ENCODE measurements at regions of chr7 and their contacts with region 1.

Region 1: GRCh38 chr7:117014673-117015133 is 61.4 kb downstream of the ST7 start:
- DNase-seq: peak; percentile 28
- H3K4me3 Mint-ChIP-seq: no peak overlapping the region
- H3K27ac Mint-ChIP-seq: no peak overlapping the region
- H3K4me1 Mint-ChIP-seq: peaks cover 40% of the 10 kb centered on the region
- H3K27me3 Mint-ChIP-seq: peaks cover 3% of the 10 kb centered on the region

Region 2: GRCh38 chr7:116786791-116787443 is 227.8 kb before region 1 on chr7:
- CTCF ChIA-PET with region 1: no interaction called
- intact Hi-C with region 1: loop called (anchors 1 kb)
- DNase-seq: peak; percentile 63
- H3K4me3 Mint-ChIP-seq: no peak overlapping the region
- H3K27ac Mint-ChIP-seq: no peak overlapping the region
- H3K4me1 Mint-ChIP-seq: no peaks in the 10 kb centered on the region
- H3K27me3 Mint-ChIP-seq: peaks cover 3% of the 10 kb centered on the region

Region 3: DNA sequence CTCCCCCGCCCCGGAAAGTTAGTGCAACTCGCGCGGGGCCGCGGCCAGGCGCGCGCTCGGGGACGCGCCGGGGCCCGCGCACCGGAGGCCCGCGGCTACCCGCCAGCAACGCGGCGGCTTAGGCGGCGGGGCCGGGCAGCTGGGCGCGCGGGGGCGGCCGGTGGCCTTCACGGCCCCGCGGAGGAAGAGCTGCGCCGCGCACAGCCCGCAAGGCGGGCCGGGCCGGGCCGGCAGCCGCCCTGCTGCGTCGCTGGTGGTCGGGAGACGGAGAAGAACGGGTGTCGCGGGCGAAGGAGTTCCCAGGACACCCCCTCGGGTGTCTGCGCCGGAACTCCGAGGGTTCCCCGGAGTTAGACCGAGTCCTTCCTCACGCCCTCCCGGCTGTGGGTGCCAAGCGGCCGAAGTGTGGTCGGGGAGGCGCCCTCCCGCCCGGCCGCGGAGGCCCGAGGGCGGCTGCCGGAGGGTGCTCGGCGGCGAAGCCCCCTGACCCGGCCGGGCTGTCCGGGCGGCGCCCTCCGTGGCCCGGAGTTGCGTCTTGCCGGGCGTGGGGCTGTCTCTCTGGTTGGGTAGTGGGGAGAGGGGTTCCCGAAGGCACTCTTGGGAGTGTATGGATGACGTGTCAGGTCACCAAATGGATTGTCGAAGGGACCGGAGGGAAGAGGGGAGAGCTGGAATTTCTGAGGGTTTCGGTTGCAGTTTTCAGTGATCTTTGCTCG is 60.8 kb before region 1 on chr7:
- CTCF ChIA-PET with region 1: interaction called, 3 read pairs
- intact Hi-C with region 1: loop called (anchors 1 kb)
- DNase-seq: peak; percentile 40
- H3K4me3 Mint-ChIP-seq: peak overlapping the region; percentile 92
- H3K27ac Mint-ChIP-seq: peak overlapping the region; percentile 87
- H3K4me1 Mint-ChIP-seq: peaks cover 21% of the 10 kb centered on the region
- H3K27me3 Mint-ChIP-seq: no peaks in the 10 kb centered on the region

Region 4: DNA sequence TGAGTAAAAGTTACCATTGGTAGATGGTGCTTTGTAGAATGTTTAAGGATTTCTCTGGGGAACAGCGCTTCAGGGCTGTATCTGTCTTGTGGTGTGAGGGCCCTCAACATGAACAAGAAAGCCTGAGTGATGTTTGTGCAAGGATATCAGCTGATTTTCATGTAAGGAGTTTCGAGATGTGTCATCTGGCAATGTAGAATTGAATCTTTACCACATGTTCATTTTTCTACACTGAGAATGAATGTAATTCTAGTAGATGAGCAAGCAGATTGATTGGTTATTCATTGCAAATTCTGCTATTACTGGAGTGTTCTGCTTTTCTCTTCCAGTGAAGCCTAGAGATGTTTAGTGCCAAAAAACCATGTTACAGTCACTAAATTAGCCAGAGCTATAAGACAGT is 26.3 kb after region 1 on chr7:
- CTCF ChIA-PET with region 1: interaction called, 3 read pairs
- intact Hi-C with region 1: loop called (anchors 1 kb)
- DNase-seq: no peak
- H3K4me3 Mint-ChIP-seq: no peak overlapping the region
- H3K27ac Mint-ChIP-seq: no peak overlapping the region
- H3K4me1 Mint-ChIP-seq: peaks cover 8% of the 10 kb centered on the region
- H3K27me3 Mint-ChIP-seq: peaks cover 2% of the 10 kb centered on the region

Region 5: DNA sequence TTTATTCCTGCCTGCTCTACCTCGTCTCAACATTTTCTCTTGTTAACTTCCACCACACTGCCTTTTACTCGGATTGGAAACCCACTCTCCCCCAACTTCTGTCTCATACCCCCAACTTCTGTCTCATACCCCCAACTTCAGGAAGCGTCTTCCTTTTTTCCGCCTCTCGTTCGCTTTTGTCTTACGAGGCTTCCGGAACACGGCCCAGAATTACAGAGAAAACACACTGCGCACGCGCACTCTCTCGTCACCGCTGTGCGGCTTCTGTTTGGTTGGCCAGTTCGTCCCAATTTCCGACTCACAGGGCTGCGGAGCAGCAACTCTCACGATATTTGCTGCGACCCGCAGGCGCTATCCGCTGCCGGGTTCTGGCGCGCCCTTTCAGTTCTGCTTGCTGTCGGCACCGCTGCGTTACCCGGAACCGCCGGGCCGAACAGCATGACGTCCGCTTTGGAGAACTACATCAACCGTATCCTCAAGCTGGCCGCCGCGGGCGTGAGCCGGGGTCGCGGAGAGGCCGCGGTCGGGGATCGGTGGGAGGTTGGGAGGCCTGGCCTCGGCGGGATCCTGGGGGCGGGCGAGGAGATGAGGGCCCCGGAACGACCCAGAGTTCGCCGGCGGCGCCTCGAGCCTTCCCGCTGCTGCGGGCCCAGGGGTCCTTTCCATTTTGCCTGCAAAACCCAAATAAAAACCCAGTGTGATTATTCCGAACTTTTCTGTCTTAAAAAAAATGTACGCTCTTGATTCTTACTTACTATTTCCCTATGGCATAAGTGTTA is 1169.3 kb after region 1 on chr7 and contains the start of gene LSM8:
- CTCF ChIA-PET with region 1: no interaction called
- intact Hi-C with region 1: loop called (anchors 10 kb)
- DNase-seq: peak; percentile 98
- H3K4me3 Mint-ChIP-seq: peak within 1 kb of the TSS; percentile 95
- H3K27ac Mint-ChIP-seq: peak within 1 kb of the TSS; percentile 98
- H3K4me1 Mint-ChIP-seq: peaks cover 32% of the 10 kb centered on the region
- H3K27me3 Mint-ChIP-seq: no peaks in the 10 kb centered on the region
- total RNA-seq, gene LSM8: 39.1 to 43.3 TPM